ENCODE measurements at regions of chr10 and their contacts with region 1.

Region 1: DNA sequence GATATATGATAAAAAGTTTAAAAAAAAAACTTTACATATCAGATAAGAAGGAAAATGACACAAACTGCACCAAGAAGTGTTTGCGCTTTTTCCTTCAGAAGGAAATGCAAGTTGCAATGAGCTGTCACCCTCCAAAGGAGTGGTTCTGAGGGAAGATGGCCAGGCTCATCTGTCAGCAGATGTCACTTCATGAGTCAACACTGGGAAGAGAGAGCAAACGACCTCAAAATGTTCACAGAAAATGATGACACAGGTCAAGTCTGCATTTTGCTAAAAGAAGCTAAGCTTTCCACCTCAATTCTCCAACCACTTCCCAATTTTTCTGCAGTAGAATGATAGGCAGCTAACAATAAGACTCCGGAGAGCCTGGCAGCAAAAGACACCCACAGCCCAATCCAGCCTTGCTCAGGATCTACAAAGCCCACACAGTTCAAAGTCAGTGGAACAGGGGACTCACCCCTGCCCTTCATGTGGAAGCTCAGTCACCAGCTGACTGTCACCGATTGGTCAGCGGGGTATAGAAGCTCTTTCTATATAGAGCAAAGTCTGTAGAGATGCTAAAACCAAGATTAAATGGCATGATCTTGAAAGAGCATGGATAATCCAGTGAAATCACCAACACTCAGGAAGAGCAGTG is 155.1 kb upstream of the NEBL start:
- DNase-seq: no peak
- H3K4me3 ChIP-seq: no peak overlapping the region
- H3K27ac ChIP-seq: no peak overlapping the region
- H3K4me1 ChIP-seq: no peaks in the 10 kb centered on the region
- H3K27me3 ChIP-seq: no peaks in the 10 kb centered on the region
- CTCF ChIP-seq: no peak
- POLR2A ChIP-seq: no peak

Region 2: DNA sequence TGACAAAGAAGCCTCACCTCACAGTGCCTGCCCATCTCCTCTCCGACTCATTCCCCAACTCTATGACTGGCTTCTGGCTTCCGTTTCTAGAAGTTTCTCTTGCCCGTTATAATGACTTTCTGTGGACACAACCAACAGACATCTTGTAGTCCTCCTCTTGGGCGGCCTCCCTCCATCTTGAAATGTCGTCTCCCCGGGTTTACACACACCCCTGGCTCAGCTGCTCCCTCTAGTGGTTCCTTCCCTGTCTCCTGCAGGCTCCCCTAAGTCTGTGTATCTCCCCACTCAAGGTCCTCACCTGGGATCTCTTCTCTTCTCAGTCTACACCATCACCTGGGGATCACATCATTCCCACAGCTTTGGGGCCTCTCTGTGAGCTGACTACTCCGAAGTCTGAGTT is 31.6 kb before region 1 on chr10:
- intact Hi-C with region 1: no loop called
- DNase-seq: no peak
- H3K4me3 ChIP-seq: no peak overlapping the region
- H3K27ac ChIP-seq: no peak overlapping the region
- H3K4me1 ChIP-seq: no peaks in the 10 kb centered on the region
- H3K27me3 ChIP-seq: no peaks in the 10 kb centered on the region
- CTCF ChIP-seq: no peak
- POLR2A ChIP-seq: no peak

Region 3: DNA sequence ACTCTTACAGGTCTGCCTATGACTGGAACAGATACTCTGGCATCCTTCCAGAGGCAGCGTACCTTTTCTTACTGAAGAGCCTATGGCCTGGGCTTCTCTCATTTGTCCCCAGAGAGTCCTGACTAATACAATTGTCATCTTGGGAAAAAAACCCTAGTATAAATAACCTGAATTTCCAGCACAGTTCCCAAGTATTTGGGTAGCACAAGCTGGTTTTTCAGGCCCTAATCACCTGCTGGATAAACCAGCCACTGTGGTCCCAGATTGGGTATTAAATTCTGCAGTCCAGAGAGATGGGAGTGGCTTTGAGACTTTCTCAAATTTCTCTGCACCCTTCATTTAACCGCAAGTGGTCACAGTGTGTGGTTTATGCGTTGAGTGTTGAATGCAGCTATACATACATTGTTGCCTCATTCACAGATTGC is 31.7 kb after region 1 on chr10:
- intact Hi-C with region 1: no loop called
- DNase-seq: no peak
- H3K4me3 ChIP-seq: no peak overlapping the region
- H3K27ac ChIP-seq: no peak overlapping the region
- H3K4me1 ChIP-seq: no peaks in the 10 kb centered on the region
- H3K27me3 ChIP-seq: no peaks in the 10 kb centered on the region
- CTCF ChIP-seq: no peak
- POLR2A ChIP-seq: no peak

Region 4: GRCh38 chr10:21172930-21173811 is 121.0 kb after region 1 on chr10:
- intact Hi-C with region 1: no loop called
- DNase-seq: peak; percentile 34 to 55
- H3K4me3 ChIP-seq: peak overlapping the region; percentile 44 to 76 (median 74)
- H3K27ac ChIP-seq: peak overlapping the region; percentile 91 to 94
- H3K4me1 ChIP-seq: no peaks in the 10 kb centered on the region
- H3K27me3 ChIP-seq: no peaks in the 10 kb centered on the region
- CTCF ChIP-seq: no peak
- POLR2A ChIP-seq: no peak

Region 5: DNA sequence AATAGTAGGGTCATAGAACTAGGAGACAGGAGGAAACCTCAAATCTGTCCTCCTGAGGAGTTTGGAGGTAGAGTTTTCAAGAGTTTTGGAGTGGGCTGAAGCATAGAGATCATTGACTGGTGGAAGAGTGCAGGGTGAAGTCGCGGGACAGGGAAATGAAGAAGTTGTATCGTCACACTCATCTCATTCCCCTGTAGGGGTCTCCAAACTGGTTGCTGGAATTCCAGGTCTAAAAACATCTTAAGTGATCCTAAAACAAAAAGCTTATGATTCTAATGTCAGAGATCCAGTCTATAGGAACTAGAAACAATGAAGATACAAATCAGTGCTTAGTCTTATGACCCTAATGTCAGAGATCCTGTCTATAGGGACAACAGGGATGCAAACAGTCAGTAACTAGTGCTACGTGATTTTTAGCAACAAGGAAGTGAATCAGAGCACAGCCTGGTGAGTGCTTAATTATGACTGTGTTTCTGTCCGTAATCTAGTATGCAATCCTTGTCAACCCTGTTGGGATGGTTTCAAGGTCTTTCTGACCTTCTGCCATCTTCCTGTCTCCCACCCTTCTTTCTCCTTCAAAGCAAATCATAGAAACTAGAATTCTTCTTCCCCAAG is 333.9 kb after region 1 on chr10:
- intact Hi-C with region 1: no loop called
- DNase-seq: no peak
- H3K4me3 ChIP-seq: no peak overlapping the region
- H3K27ac ChIP-seq: no peak overlapping the region
- H3K4me1 ChIP-seq: no peaks in the 10 kb centered on the region
- H3K27me3 ChIP-seq: no peaks in the 10 kb centered on the region
- CTCF ChIP-seq: no peak
- POLR2A ChIP-seq: no peak

Region 6: GRCh38 chr10:21907436-21907835 is 855.2 kb after region 1 on chr10:
- intact Hi-C with region 1: loop called (anchors 5 kb)
- DNase-seq: no peak
- H3K4me3 ChIP-seq: no peak overlapping the region
- H3K27ac ChIP-seq: no peak overlapping the region
- H3K4me1 ChIP-seq: no peaks in the 10 kb centered on the region
- H3K27me3 ChIP-seq: no peaks in the 10 kb centered on the region
- CTCF ChIP-seq: no peak
- POLR2A ChIP-seq: no peak